ENCODE measurements at regions of chr11 and their contacts with region 1.

Region 1: GRCh38 chr11:115990004-115990447 is 485.8 kb upstream of the CADM1 start:
- DNase-seq: peak; percentile 49
- ATAC-seq: peak; percentile 66

Region 2: GRCh38 chr11:115659061-115659963 is 330.7 kb before region 1 on chr11:
- intact Hi-C with region 1: no loop called
- DNase-seq: peak; percentile 52
- ATAC-seq: peak; percentile 82

Region 3: GRCh38 chr11:116276051-116277044 is 286.3 kb after region 1 on chr11:
- intact Hi-C with region 1: loop called (anchors 5 kb)
- DNase-seq: peak; percentile 86
- ATAC-seq: peak; percentile 91

Measured in Right ventricle myocardium superior (tissue), 1 donor.